Mammary epithelial cell (primary cell): ENCODE measurements at regions of chr10 and their contacts with region 1.

Region 1: GRCh38 chr10:69639291-69640195 is 9.5 kb downstream of the FAM241B start:
- DNase-seq: peak; percentile 57
- H3K4me3 ChIP-seq: no peak overlapping the region
- H3K27ac ChIP-seq: peak overlapping the region; percentile 38
- H3K4me1 ChIP-seq: peaks cover 29% of the 10 kb centered on the region
- H3K27me3 ChIP-seq: no peaks in the 10 kb centered on the region
- CTCF ChIP-seq: peak; percentile 81 to 90

Region 2: DNA sequence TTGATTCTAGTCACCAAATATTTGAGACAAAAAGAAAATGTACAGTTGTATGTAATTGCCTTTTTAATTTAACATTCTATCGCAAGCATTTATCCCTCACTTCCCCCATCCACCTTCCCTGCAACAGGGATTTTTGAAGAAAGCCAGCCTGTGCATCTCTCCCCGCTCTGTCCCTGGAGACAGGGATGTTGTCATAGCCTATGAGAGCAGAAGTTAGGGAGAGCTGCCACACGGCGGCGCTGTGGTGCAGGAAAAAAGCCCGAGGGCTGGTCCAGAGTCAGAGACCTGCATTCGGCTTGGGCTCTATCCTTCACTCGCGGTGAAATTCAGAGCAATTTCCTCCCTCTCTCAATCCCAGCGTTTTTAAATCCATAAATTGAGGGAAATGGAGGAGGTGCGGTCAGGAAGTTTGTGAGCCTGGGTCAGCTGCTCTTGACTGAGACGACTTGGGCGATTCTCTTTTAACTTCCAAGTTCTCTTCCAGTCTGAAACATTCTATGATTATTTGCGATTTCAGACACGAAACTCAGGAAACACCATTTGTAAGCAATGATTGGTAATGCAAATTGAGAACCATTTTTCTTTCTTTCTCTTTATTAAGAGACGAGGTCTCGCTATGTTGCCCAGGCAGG is 401.9 kb before region 1 on chr10:
- CTCF ChIA-PET with region 1: no interaction called
- dilution Hi-C with region 1: no loop called
- in situ Hi-C with region 1: no loop called
- intact Hi-C with region 1: loop called (anchors 5 kb)
- DNase-seq: peak; percentile 61
- H3K4me3 ChIP-seq: no peak overlapping the region
- H3K27ac ChIP-seq: no peak overlapping the region
- H3K4me1 ChIP-seq: peaks cover 13% of the 10 kb centered on the region
- H3K27me3 ChIP-seq: no peaks in the 10 kb centered on the region
- CTCF ChIP-seq: peak; percentile 90 to 92

Region 3: GRCh38 chr10:69425511-69426298 is 213.8 kb before region 1 on chr10:
- CTCF ChIA-PET with region 1: no interaction called
- dilution Hi-C with region 1: no loop called
- in situ Hi-C with region 1: loop called in 1 of 2 experiments (anchors 10 kb)
- intact Hi-C with region 1: loop called (anchors 2 kb)
- DNase-seq: peak; percentile 75
- H3K4me3 ChIP-seq: no peak overlapping the region
- H3K27ac ChIP-seq: no peak overlapping the region
- H3K4me1 ChIP-seq: peaks cover 14% of the 10 kb centered on the region
- H3K27me3 ChIP-seq: no peaks in the 10 kb centered on the region
- CTCF ChIP-seq: no peak

Region 4: DNA sequence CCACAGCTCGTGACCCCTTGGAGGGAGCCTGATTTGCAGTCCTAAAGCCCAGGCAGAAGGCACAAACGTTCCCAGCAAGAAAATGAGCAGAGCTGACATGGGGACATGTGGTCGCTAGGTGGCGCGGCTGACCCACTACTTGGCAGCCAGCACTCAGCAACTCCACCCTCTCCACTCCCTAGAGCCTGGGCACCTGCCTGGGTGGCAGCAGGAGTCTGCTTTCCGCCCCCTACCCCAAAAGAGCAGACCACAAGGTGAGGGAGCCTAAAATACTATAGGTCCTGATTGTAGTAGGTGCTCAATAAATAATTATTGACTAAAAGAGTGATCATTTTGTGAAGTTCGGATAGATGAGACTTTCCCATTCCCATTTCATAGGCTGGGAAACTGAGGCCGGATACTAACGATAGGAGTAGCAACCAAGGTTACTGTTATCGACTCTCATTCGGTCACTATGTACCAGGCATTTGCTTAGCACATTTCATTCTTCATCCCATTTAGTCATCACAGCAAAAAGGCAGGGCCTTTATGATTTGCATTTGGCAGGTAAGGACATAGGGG is 123.8 kb before region 1 on chr10:
- CTCF ChIA-PET with region 1: interaction called, 12 read pairs
- dilution Hi-C with region 1: no loop called
- in situ Hi-C with region 1: loop called (anchors 5 kb)
- intact Hi-C with region 1: loop called (anchors 1 kb)
- DNase-seq: peak; percentile 53
- H3K4me3 ChIP-seq: no peak overlapping the region
- H3K27ac ChIP-seq: no peak overlapping the region
- H3K4me1 ChIP-seq: no peaks in the 10 kb centered on the region
- H3K27me3 ChIP-seq: peaks cover 2% of the 10 kb centered on the region
- CTCF ChIP-seq: peak; percentile 94 to 96

Region 5: GRCh38 chr10:69728335-69728870 is 88.9 kb after region 1 on chr10:
- CTCF ChIA-PET with region 1: no interaction called
- dilution Hi-C with region 1: no loop called
- in situ Hi-C with region 1: no loop called
- intact Hi-C with region 1: no loop called
- DNase-seq: peak; percentile 94
- H3K4me3 ChIP-seq: no peak overlapping the region
- H3K27ac ChIP-seq: peak overlapping the region; percentile 61
- H3K4me1 ChIP-seq: peaks cover 46% of the 10 kb centered on the region
- H3K27me3 ChIP-seq: no peaks in the 10 kb centered on the region
- CTCF ChIP-seq: no peak

Region 6: DNA sequence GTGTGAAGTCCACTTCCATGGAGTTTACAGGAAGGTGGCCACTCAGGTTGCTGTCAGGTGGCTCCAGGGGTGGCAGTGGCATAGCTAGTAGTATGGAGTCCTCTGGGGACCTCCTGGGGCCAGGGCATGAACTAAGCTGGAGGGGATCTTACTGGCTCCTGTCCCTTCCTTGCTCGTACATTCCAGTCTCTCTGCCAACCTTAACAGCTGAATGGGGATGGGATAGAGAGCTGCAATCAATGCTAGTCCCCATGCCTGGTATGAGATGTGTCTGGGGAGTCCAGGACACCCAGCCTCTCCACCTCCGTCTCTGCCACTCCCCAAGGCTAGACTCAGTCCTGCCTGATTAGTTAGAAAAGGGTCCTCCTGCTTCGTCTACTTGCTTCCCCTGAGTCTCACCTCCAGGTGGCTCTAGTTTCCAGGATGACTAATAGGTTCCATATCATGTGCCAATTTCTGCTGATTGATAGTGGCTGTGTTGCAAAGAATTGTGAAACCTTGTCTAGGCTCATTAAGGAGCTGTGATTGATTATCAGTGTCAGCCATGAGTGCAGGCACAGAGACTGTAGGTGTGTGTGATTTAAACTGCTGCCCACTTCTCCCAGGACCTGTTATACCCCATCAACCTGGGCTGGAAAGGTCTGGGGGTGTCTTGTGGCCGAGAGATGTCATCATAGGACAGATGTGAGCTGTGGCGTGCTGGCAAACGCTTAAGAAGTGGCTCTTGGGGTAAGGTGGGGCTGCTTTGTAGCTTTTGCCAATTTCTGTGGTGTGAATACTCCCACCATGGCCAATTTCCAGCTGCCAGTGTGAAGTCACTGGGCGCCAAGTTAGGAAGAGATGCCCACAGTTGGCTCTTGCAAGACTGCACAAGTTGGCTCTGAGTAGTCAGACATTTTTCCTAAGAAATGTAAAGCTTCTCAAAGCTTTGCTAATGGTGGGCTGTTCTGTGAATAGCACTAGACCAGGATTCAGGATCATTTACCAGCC is 222.0 kb after region 1 on chr10:
- CTCF ChIA-PET with region 1: no interaction called
- dilution Hi-C with region 1: no loop called
- in situ Hi-C with region 1: no loop called
- intact Hi-C with region 1: loop called (anchors 5 kb)
- DNase-seq: peak; percentile 92
- H3K4me3 ChIP-seq: no peak overlapping the region
- H3K27ac ChIP-seq: peak overlapping the region; percentile 68
- H3K4me1 ChIP-seq: peaks cover 55% of the 10 kb centered on the region
- H3K27me3 ChIP-seq: no peaks in the 10 kb centered on the region
- CTCF ChIP-seq: peak; percentile 55 to 67

Region 7: GRCh38 chr10:69895759-69896158 is 256.2 kb after region 1 on chr10:
- CTCF ChIA-PET with region 1: no interaction called
- dilution Hi-C with region 1: no loop called
- in situ Hi-C with region 1: no loop called
- intact Hi-C with region 1: no loop called
- DNase-seq: peak; percentile 21
- H3K4me3 ChIP-seq: no peak overlapping the region
- H3K27ac ChIP-seq: no peak overlapping the region
- H3K4me1 ChIP-seq: no peaks in the 10 kb centered on the region
- H3K27me3 ChIP-seq: no peaks in the 10 kb centered on the region
- CTCF ChIP-seq: no peak